Mammary epithelial cell (primary cell): ENCODE measurements at regions of chr11 and their contacts with region 1.

Region 1: GRCh38 chr11:12989428-12990161 is 19.5 kb upstream of the RASSF10 start:
- DNase-seq: peak; percentile 74
- H3K4me3 ChIP-seq: no peak overlapping the region
- H3K27ac ChIP-seq: no peak overlapping the region
- H3K4me1 ChIP-seq: peaks cover 16% of the 10 kb centered on the region
- H3K27me3 ChIP-seq: no peaks in the 10 kb centered on the region
- CTCF ChIP-seq: no peak

Region 2: DNA sequence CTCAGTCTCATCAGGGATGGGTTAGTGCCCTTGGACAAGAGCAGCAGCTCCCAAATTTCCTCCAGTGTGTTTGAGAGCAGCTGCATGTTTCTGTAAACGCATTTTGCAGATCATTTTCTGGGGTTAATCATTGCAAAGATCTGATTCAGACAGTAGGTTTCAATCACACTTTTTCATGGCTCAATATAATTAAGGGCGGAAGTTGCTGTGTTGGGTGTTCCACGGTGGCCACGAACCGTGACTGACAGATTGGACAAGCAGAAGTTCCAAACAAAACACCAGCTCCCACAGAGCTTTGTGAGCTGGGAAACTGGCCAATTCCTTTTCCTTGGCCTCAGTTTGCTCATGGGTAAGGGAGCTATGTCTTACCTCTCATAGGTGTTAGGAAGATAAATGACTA is 11.1 kb after region 1 on chr11:
- CTCF ChIA-PET with region 1: interaction called, 29 read pairs
- dilution Hi-C with region 1: no loop called
- in situ Hi-C with region 1: no loop called
- intact Hi-C with region 1: no loop called
- DNase-seq: no peak
- H3K4me3 ChIP-seq: no peak overlapping the region
- H3K27ac ChIP-seq: no peak overlapping the region
- H3K4me1 ChIP-seq: no peaks in the 10 kb centered on the region
- H3K27me3 ChIP-seq: no peaks in the 10 kb centered on the region
- CTCF ChIP-seq: no peak